Activated T-helper 2 cell treated with anti-CD3 and anti-CD28 coated beads, Interferon-gamma antibody, Interleukin-2, Interleukin-4, amounts not matched to agents 10 μg/mL and 5 μg/mL and 100 μg/mL, durations not matched to agents 14 hours and 24 hours and 36 hours (primary cell): ENCODE measurements at regions of chr11 and their contacts with region 1.

Region 1: GRCh38 chr11:20599221-20600019 is at the start of gene SLC6A5:
- DNase-seq: peak; percentile 20
- H3K4me3 Mint-ChIP-seq: no peak within 1 kb of the TSS
- H3K27ac Mint-ChIP-seq: peak within 1 kb of the TSS; percentile 29
- H3K4me1 Mint-ChIP-seq: peaks cover 2% of the 10 kb centered on the region
- H3K27me3 Mint-ChIP-seq: peaks cover 92% of the 10 kb centered on the region
- total RNA-seq, gene SLC6A5: not detected in 2 replicates

Region 2: DNA sequence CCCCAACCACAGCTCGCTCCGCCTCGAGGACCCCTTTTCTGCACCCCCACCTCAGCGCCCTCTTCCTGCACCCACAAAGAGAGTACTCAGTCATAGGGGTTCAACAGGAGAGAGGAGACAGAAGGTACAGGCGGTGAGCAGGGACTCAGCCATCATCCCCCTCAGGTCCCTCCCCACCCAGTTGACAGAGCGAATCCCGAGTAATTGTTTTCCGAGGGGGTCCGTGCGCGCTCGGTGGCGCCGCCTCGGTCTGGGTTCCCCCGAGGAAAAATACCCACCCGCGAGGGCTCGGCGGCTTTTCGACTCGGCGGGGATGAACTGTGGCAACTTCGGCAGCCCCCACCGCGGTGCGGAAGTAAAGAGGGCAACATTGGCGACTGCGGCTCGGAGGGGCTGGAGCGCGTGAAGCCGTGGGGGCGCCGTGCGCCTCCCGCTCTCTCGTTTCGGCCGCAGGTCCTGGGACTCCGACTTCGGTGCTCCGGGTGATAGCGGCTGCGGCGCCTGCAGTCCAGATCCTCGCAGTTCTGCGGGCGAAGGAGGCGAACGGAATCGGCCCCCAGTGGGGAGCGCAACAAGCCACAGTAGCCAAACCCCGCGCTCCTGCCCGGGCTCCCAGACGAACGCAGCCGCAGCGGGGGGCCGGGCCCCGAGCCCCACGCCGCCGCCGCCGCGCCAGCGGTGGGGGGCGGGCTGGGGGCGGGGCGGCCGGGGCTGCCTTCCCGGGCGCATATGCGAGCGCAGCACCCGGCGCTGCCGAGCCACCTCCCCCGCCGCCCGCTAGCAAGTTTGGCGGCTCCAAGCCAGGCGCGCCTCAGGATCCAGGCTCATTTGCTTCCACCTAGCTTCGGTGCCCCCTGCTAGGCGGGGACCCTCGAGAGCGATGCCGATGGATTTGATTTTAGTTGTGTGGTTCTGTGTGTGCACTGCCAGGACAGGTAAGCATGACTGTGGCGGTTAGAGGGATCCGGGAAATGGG is 69.7 kb after region 1 on chr11 and contains the start of gene NELL1:
- intact Hi-C with region 1: loop called (anchors 5 kb)
- DNase-seq: no peak
- H3K4me3 Mint-ChIP-seq: no peak within 1 kb of the TSS
- H3K27ac Mint-ChIP-seq: no peak within 1 kb of the TSS
- H3K4me1 Mint-ChIP-seq: no peaks in the 10 kb centered on the region
- H3K27me3 Mint-ChIP-seq: peaks cover 62% of the 10 kb centered on the region
- total RNA-seq, gene NELL1: 0.07 TPM in 1 of 2 replicates, not detected in the other

Region 3: GRCh38 chr11:22337596-22338485 is 1738.4 kb after region 1 on chr11 and contains the start of gene SLC17A6:
- intact Hi-C with region 1: loop called (anchors 5 kb)
- DNase-seq: no peak
- H3K4me3 Mint-ChIP-seq: no peak within 1 kb of the TSS
- H3K27ac Mint-ChIP-seq: no peak within 1 kb of the TSS
- H3K4me1 Mint-ChIP-seq: peaks cover 8% of the 10 kb centered on the region
- H3K27me3 Mint-ChIP-seq: peaks cover 54% of the 10 kb centered on the region
- total RNA-seq, gene SLC17A6: not detected in 2 replicates